B cell (primary cell): ENCODE measurements at regions of chr16 and their contacts with region 1.

Region 1: DNA sequence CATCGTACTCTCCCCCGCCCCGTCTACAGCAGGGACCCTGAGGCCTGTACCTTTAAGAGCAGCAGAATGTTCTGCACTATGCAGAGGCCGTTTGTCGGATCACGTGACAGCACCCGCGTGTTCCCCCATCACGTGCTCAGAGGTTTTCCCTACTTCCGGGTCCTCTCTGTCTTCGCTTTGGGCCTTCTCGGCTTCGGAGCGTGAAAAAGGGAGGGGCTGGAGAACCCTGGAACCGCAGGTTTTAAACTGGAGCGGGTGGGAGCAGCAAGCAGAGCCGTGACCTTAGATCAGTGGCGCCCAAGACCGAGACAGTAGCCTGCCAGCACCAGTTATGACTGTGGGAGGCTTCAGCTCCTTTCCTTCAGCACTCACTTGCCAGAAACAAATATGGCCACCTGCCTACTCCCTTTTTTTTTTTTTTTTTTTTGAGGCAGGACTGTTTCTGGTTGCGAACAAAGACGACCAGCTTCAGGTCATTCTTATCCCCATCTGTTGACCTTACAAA is at the start of gene CLN3:
- DNase-seq: peak; percentile 97
- ATAC-seq: peak; percentile 72
- H3K4me3 ChIP-seq: peak within 1 kb of the TSS; percentile 87 to 100 (median 94)
- H3K4me3 Mint-ChIP-seq: peak within 1 kb of the TSS; percentile 98
- H3K27ac ChIP-seq: peak within 1 kb of the TSS; percentile 89 to 99
- H3K27ac Mint-ChIP-seq: peak within 1 kb of the TSS; percentile 100
- H3K4me1 ChIP-seq: peaks cover 24 to 45% of the 10 kb centered on the region in 2 donors
- H3K4me1 Mint-ChIP-seq: peaks cover 42% of the 10 kb centered on the region
- H3K27me3 ChIP-seq: no peaks in the 10 kb centered on the region
- H3K27me3 Mint-ChIP-seq: no peaks in the 10 kb centered on the region
- CTCF ChIP-seq: no peak
- total RNA-seq, gene CLN3: 37.7 and 40.2 TPM in 2 replicates

Region 2: DNA sequence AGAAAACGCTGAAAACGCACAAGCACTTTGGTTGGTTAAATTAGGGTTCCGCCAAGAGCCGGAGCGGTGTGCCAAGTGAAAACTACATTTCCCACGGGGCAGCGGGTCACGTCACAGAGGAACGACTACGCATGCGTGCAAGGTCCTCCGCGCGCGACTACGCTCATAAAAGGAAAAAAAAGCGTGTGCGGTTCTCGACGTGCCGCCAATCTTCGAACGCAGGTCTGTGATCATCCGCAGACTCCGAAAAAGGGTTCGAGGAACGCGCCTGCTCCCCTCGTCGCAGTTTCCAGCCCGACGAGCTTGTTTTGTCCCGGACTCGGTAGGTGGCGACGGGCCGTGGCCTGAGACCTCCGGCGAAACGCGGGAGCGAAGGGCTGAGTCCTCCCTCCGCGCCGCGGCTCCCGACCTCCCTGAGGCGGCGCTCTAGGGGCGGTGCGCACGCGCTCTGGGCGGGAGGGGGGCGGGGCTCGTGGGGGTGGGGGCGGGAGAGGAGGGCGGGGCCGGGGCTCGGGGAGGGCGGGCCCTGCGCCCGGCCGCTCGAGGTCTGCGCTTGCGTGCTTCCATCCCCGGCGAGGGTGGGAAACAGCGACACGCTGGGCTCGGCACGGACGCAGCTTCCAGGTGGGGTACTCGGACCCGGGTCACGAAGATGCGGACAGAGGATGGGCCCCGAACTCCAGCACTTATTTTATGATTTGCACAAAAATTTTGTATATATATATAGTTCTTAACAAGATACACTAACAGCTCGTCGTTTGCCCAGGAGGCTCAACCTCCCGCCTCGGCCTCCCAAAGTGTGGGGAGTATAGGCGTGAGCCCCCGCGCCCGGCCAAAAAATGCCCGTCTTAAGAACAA is 62.0 kb after region 1 on chr16 and contains the start of gene SGF29:
- CTCF ChIA-PET with region 1: interaction called, 6 read pairs
- POLR2A ChIA-PET with region 1: interaction called, 4 read pairs
- intact Hi-C with region 1: loop called (anchors 1 kb)
- DNase-seq: peak; percentile 98
- ATAC-seq: peak; percentile 88
- H3K4me3 ChIP-seq: peak within 1 kb of the TSS; percentile 69 to 88 (median 74)
- H3K4me3 Mint-ChIP-seq: peak within 1 kb of the TSS; percentile 96
- H3K27ac ChIP-seq: peak within 1 kb of the TSS; percentile 95
- H3K27ac Mint-ChIP-seq: peak within 1 kb of the TSS; percentile 98
- H3K4me1 ChIP-seq: peaks cover 11 to 15% of the 10 kb centered on the region in 2 donors
- H3K4me1 Mint-ChIP-seq: peaks cover 23% of the 10 kb centered on the region
- H3K27me3 ChIP-seq: no peaks in the 10 kb centered on the region
- H3K27me3 Mint-ChIP-seq: no peaks in the 10 kb centered on the region
- CTCF ChIP-seq: peak; percentile 37
- total RNA-seq, gene SGF29: 52.5 and 52.9 TPM in 2 replicates

Region 3: DNA sequence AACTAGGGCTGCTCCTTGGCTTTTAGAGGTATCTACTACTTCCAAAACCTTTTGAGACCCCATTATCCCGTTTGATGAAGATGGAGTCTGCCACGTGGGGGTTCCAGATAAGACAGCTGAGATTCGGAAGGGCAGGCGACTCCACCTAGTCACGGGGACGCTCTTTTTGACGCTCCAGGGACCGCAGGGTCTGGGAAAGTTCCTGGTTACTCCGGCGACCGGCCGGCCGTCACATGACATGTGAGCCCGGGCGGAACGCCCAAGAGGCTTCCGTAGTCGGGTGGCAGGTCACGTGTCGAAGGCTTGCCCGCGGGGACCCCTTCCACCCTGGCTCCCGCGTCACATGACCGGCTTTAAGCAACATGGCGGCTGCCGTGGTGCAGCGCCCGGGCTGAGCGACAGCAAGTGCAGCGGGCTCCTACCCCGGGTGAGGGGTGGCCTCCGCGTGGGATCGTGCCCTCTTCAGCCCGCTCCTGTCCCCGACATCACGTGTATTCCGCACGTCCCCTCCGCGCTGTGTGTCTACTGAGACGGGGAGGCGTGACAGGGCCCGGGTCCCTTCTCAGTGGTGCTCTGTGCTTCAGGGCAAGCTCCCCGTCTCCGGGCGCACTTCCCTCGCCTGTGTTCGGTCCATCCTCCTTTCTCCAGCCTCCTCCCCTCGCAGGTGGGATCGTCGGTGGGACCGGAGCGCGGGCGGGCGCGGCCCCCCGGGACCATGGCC is 482.6 kb after region 1 on chr16 and contains the start of gene SPNS1:
- CTCF ChIA-PET with region 1: no interaction called
- POLR2A ChIA-PET with region 1: no interaction called
- intact Hi-C with region 1: loop called (anchors 5 kb)
- DNase-seq: peak; percentile 96
- ATAC-seq: peak; percentile 89
- H3K4me3 ChIP-seq: peak within 1 kb of the TSS; percentile 75 to 95 (median 83)
- H3K4me3 Mint-ChIP-seq: peak within 1 kb of the TSS; percentile 96
- H3K27ac ChIP-seq: peak within 1 kb of the TSS; percentile 65 to 90
- H3K27ac Mint-ChIP-seq: peak within 1 kb of the TSS; percentile 95
- H3K4me1 ChIP-seq: peaks cover 13 to 17% of the 10 kb centered on the region in 2 donors
- H3K4me1 Mint-ChIP-seq: peaks cover 30% of the 10 kb centered on the region
- H3K27me3 ChIP-seq: no peaks in the 10 kb centered on the region
- H3K27me3 Mint-ChIP-seq: no peaks in the 10 kb centered on the region
- CTCF ChIP-seq: no peak
- total RNA-seq, gene SPNS1: 36.4 and 37.8 TPM in 2 replicates

Region 4: DNA sequence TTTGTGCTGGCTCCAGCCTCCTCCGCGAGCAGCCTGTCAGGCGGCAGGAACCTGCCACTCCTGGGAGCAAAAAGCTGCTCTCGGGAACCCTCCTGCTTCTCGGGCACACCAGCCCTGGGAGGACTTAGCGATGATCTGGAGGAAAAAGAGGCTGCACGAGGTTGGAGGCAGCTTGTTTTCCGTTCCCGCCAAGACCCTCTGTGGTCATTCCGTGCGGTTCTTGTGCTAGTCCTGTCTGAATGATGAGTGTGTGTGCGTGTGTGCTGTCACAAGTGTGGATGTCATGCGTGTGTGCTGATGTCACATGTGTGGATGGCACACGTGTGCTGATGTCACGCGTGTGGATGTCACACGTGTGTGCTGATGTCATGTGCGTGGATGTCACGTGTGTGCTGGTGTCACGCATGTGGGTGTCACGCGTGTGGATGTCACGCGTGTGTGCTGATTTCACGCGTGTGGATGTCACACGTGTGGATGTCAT is 764.5 kb after region 1 on chr16:
- CTCF ChIA-PET with region 1: no interaction called
- POLR2A ChIA-PET with region 1: no interaction called
- intact Hi-C with region 1: no loop called
- DNase-seq: no peak
- ATAC-seq: no peak
- H3K4me3 ChIP-seq: no peak overlapping the region
- H3K4me3 Mint-ChIP-seq: no peak overlapping the region
- H3K27ac ChIP-seq: no peak overlapping the region
- H3K27ac Mint-ChIP-seq: no peak overlapping the region
- H3K4me1 ChIP-seq: no peaks in the 10 kb centered on the region
- H3K4me1 Mint-ChIP-seq: no peaks in the 10 kb centered on the region
- H3K27me3 ChIP-seq: no peaks in the 10 kb centered on the region
- H3K27me3 Mint-ChIP-seq: no peaks in the 10 kb centered on the region
- CTCF ChIP-seq: no peak